ENCODE measurements at regions of chr10 and their contacts with region 1.

Region 1: GRCh38 chr10:63547628-63548360 is 26.6 kb downstream of the REEP3 start:
- DNase-seq: no peak
- CTCF ChIP-seq: no peak

Region 2: DNA sequence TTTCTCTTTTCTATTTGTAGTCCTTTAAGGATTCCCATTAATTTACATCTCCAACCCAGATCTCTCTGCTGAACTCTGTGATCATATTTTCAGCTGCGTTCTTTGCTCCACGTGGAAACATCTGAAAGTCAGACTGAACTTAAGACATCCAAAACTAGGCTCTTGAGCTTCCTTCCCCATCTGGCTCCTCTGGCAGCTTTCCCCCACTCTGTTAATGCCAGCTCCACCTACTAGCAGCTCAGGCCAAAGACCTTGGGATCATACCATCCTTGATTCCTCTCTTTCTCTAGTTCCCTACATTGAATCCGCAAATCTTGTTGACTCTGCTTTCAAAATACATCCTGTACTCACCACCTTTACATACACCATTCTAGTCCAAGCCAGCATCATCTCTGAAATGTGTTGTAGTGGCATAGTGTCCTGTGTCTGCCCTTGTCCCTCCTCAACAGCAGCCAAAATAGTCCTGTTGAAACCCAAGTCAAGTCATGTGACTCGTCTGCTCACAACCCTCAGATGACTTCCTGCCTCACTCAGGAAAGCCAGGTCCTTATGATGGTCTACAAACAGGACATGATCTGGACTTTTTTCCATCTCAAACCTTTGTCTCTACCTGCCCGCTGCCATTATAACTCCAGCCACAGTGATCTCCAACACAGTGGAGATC is 19.6 kb before region 1 on chr10:
- CTCF ChIA-PET with region 1: interaction called, 20 read pairs
- POLR2A ChIA-PET with region 1: no interaction called
- DNase-seq: no peak
- CTCF ChIP-seq: no peak

Region 3: DNA sequence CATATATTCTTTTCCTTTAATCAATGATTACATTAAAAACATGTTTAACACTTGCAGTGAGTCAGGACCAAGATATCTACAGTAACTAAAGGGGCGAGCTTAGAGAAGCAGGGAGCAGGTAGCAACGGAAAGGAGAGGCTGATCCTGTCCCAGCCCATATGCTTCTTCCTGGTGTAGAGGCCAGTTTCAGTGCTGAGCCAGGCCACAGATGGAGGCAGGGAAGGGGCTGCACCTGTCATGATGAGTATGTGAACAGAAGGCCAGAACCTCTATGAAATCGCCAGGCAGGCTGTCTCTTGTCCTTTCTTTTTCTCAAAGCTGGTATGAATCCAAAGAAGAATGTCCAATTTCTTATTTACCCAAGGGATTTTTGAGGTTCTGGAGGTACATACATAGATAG is 10.3 kb before region 1 on chr10:
- CTCF ChIA-PET with region 1: interaction called, 24 read pairs
- POLR2A ChIA-PET with region 1: no interaction called
- DNase-seq: no peak
- CTCF ChIP-seq: no peak